ENCODE measurements at regions of chr11 and their contacts with region 1.

Region 1: DNA sequence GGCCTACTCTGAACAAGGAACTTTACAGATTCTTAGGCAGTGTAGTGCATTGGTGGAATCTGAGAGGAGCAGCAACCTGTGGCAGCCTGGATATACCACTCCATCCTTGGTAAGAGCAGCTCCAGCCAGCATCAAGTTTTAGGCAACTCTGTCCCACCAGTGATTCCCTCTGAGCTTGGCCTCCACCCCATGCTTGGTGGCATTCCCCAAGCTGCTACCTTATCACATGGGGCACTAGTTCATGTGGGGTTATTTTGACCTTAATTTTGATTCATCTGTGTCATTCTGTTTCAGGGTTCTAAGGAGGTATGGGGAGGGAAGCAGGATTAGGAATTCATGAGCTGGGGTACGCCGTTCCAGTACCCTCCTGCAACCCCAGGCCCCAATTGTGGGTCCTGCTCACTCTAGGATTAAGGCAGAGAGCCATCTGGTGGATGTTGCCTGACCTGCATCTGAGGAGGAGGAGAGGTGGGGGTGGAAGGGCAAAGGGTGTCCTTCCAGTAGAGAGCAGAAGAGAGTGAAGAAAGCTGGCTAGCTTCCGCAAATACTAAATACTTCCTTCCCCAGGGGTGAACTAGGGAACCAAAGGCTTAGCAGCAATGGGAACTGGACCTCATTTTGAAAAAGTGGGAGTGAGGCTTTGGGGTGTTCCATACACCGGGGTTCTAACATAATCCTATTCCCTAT is 10.5 kb downstream of the LRRC51 start:
- DNase-seq: no peak
- ATAC-seq: peak; percentile 99
- H3K4me3 ChIP-seq: no peak overlapping the region
- H3K27ac ChIP-seq: no peak overlapping the region
- H3K4me1 ChIP-seq: no peaks in the 10 kb centered on the region
- H3K27me3 ChIP-seq: no peaks in the 10 kb centered on the region
- CTCF ChIP-seq: peak; percentile 84 to 91 (median 89)
- EP300 ChIP-seq: no peak
- POLR2A ChIP-seq: peak; percentile 33
- RAD21 ChIP-seq: peak; percentile 93

Region 2: GRCh38 chr11:72015511-72016171 is 75.5 kb before region 1 on chr11:
- CTCF ChIA-PET with region 1: interaction called, 416 read pairs
- POLR2A ChIA-PET with region 1: no interaction called
- RAD21 ChIA-PET with region 1: interaction called, 112 read pairs
- SMC1A ChIA-PET with region 1: interaction called, 245 read pairs
- in situ Hi-C with region 1: no loop called
- intact Hi-C with region 1: no loop called
- DNase-seq: no peak
- ATAC-seq: peak; percentile 65
- H3K4me3 ChIP-seq: no peak overlapping the region
- H3K27ac ChIP-seq: no peak overlapping the region
- H3K4me1 ChIP-seq: no peaks in the 10 kb centered on the region
- H3K27me3 ChIP-seq: no peaks in the 10 kb centered on the region
- CTCF ChIP-seq: peak; percentile 40 to 72 (median 62); a peak in 5 of 6 replicates
- EP300 ChIP-seq: no peak
- POLR2A ChIP-seq: no peak
- RAD21 ChIP-seq: peak; percentile 55

Region 3: GRCh38 chr11:72048766-72049456 is 42.2 kb before region 1 on chr11:
- CTCF ChIA-PET with region 1: interaction called, 12 read pairs
- POLR2A ChIA-PET with region 1: interaction called, 6 read pairs
- RAD21 ChIA-PET with region 1: interaction called, 3 read pairs
- SMC1A ChIA-PET with region 1: interaction called, 8 read pairs
- in situ Hi-C with region 1: no loop called
- intact Hi-C with region 1: no loop called
- DNase-seq: no peak
- ATAC-seq: no peak
- H3K4me3 ChIP-seq: no peak overlapping the region
- H3K27ac ChIP-seq: no peak overlapping the region
- H3K4me1 ChIP-seq: no peaks in the 10 kb centered on the region
- H3K27me3 ChIP-seq: no peaks in the 10 kb centered on the region
- CTCF ChIP-seq: no peak
- EP300 ChIP-seq: no peak
- POLR2A ChIP-seq: no peak
- RAD21 ChIP-seq: no peak

Region 4: DNA sequence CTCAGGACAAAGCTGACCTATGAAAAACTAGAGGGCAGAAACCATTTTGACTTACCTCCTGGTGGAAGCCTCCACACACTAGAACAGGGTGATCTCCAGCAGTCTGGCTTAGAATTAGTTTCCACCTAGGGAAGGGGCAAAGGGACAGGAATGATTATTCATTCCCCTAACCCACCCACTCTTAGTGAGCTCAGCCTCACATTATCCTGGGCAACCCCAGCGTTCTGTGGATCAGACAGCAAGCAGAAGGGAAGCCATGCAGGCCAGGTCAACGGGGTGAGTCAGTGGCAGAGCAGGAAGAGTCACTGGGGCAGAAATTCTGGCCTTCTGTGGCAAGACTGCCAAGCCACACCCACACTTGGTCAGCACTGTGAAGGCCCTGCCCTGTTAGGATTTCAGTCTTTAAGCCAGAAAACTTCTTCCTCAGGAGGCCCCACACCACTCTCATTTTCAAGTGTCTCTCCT is 21.3 kb before region 1 on chr11:
- CTCF ChIA-PET with region 1: interaction called, 19 read pairs
- POLR2A ChIA-PET with region 1: interaction called, 3 read pairs
- RAD21 ChIA-PET with region 1: interaction called, 5 read pairs
- SMC1A ChIA-PET with region 1: interaction called, 10 read pairs
- in situ Hi-C with region 1: no loop called
- intact Hi-C with region 1: no loop called
- DNase-seq: no peak
- ATAC-seq: peak; percentile 92
- H3K4me3 ChIP-seq: peak overlapping the region; percentile 59; the same call in 1 of the 2 replicates
- H3K27ac ChIP-seq: peak overlapping the region; percentile 63
- H3K4me1 ChIP-seq: peaks cover 27% of the 10 kb centered on the region
- H3K27me3 ChIP-seq: no peaks in the 10 kb centered on the region
- CTCF ChIP-seq: no peak
- EP300 ChIP-seq: no peak
- POLR2A ChIP-seq: no peak
- RAD21 ChIP-seq: no peak

Region 5: GRCh38 chr11:72080256-72080974 is 10.7 kb before region 1 on chr11 and contains the starts of genes LRRC51 and NUMA1:
- CTCF ChIA-PET with region 1: interaction called, 49 read pairs
- POLR2A ChIA-PET with region 1: interaction called, 4 read pairs
- RAD21 ChIA-PET with region 1: interaction called, 16 read pairs
- SMC1A ChIA-PET with region 1: interaction called, 30 read pairs
- in situ Hi-C with region 1: no loop called
- intact Hi-C with region 1: no loop called
- DNase-seq: peak; percentile 99
- ATAC-seq: peak; percentile 97
- H3K4me3 ChIP-seq: peak within 1 kb of the TSS; percentile 77
- H3K27ac ChIP-seq: peak within 1 kb of the TSS; percentile 78
- H3K4me1 ChIP-seq: peaks cover 16% of the 10 kb centered on the region
- H3K27me3 ChIP-seq: no peaks in the 10 kb centered on the region
- CTCF ChIP-seq: no peak
- EP300 ChIP-seq: no peak
- POLR2A ChIP-seq: peak; percentile 83
- RAD21 ChIP-seq: no peak
- polyA plus RNA-seq, gene LRRC51: 4.7 to 6.2 TPM
- polyA plus RNA-seq, gene NUMA1: 5.5 to 7.1 TPM

Region 6: GRCh38 chr11:72141066-72141465 is 49.9 kb after region 1 on chr11:
- CTCF ChIA-PET with region 1: interaction called, 22 read pairs
- POLR2A ChIA-PET with region 1: interaction called, 4 read pairs
- RAD21 ChIA-PET with region 1: interaction called, 10 read pairs
- SMC1A ChIA-PET with region 1: interaction called, 5 read pairs
- in situ Hi-C with region 1: no loop called
- intact Hi-C with region 1: no loop called
- DNase-seq: no peak
- ATAC-seq: no peak
- H3K4me3 ChIP-seq: no peak overlapping the region
- H3K27ac ChIP-seq: no peak overlapping the region
- H3K4me1 ChIP-seq: no peaks in the 10 kb centered on the region
- H3K27me3 ChIP-seq: no peaks in the 10 kb centered on the region; a peak in 1 of 4 replicates
- CTCF ChIP-seq: no peak
- EP300 ChIP-seq: no peak
- POLR2A ChIP-seq: no peak
- RAD21 ChIP-seq: no peak

Region 7: GRCh38 chr11:72189461-72190275 is 98.5 kb after region 1 on chr11:
- CTCF ChIA-PET with region 1: no interaction called
- POLR2A ChIA-PET with region 1: no interaction called
- RAD21 ChIA-PET with region 1: no interaction called
- SMC1A ChIA-PET with region 1: no interaction called
- in situ Hi-C with region 1: no loop called
- intact Hi-C with region 1: no loop called
- DNase-seq: no peak
- ATAC-seq: no peak
- H3K4me3 ChIP-seq: no peak overlapping the region
- H3K27ac ChIP-seq: no peak overlapping the region
- H3K4me1 ChIP-seq: no peaks in the 10 kb centered on the region
- H3K27me3 ChIP-seq: no peaks in the 10 kb centered on the region
- CTCF ChIP-seq: no peak
- EP300 ChIP-seq: no peak
- POLR2A ChIP-seq: no peak
- RAD21 ChIP-seq: no peak